ENCODE measurements at regions of chr16 and their contacts with region 1.

Region 1: GRCh38 chr16:12067714-12068401 is 91.3 kb downstream of the SNX29 start:
- DNase-seq: peak; percentile 84
- ATAC-seq: peak; percentile 91
- H3K4me3 ChIP-seq: no peak overlapping the region
- H3K4me3 Mint-ChIP-seq: no peak overlapping the region
- H3K27ac ChIP-seq: no peak overlapping the region
- H3K27ac Mint-ChIP-seq: peak overlapping the region; percentile 61
- H3K4me1 ChIP-seq: peaks cover 0 to 4% of the 10 kb centered on the region in 2 donors
- H3K4me1 Mint-ChIP-seq: peaks cover 21% of the 10 kb centered on the region
- H3K27me3 ChIP-seq: no peaks in the 10 kb centered on the region
- H3K27me3 Mint-ChIP-seq: no peaks in the 10 kb centered on the region
- CTCF ChIP-seq: peak; percentile 94

Region 2: DNA sequence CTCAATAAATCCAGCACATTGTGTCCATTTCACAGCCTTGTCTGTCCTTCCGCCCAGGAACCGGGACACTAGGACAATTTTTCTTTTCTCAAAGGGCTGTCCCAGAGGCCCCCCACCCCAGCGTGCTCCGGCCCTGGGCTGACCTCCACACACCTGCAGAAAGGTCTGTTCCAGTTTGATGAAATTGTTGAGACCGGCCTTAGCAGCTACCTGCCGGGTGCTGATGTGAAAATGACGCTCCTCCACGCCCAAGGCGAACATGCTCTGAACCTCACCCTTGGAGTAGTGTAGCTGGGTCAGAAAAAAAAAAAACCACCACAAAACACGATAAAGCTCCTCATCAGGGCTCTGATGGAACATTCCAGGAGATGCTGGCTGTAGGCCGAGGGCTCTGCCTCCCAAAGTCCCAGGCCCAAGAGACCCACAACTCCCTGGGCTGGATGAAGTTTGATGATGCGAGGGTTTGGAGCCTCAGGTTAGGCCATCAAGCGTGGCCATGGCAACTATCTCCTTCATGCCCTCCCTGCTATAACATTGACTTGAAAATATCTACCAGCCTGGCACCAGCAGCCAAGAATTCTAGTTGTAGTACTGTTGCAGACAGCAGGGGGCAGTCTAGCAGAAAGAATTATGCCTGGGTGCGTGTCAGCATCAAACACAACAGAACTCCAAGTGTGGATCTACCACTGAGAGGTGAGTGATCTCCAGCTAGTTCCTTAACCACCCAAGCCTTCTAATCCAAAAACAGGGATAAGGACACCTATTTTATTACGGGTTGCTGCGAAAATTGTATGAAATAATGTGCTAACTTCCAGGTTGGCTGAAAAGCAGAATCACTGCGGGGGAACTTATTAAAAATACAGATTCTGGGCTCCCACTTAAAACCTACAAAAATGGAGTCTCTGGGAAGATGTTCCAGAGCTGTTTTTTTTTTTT is 660.5 kb before region 1 on chr16:
- CTCF ChIA-PET with region 1: no interaction called
- POLR2A ChIA-PET with region 1: no interaction called
- intact Hi-C with region 1: loop called (anchors 5 kb)
- DNase-seq: peak; percentile 78
- ATAC-seq: peak; percentile 71
- H3K4me3 ChIP-seq: no peak overlapping the region
- H3K4me3 Mint-ChIP-seq: no peak overlapping the region
- H3K27ac ChIP-seq: no peak overlapping the region
- H3K27ac Mint-ChIP-seq: no peak overlapping the region
- H3K4me1 ChIP-seq: no peaks in the 10 kb centered on the region
- H3K4me1 Mint-ChIP-seq: peaks cover 2% of the 10 kb centered on the region
- H3K27me3 ChIP-seq: no peaks in the 10 kb centered on the region
- H3K27me3 Mint-ChIP-seq: no peaks in the 10 kb centered on the region
- CTCF ChIP-seq: peak; percentile 83

Region 3: DNA sequence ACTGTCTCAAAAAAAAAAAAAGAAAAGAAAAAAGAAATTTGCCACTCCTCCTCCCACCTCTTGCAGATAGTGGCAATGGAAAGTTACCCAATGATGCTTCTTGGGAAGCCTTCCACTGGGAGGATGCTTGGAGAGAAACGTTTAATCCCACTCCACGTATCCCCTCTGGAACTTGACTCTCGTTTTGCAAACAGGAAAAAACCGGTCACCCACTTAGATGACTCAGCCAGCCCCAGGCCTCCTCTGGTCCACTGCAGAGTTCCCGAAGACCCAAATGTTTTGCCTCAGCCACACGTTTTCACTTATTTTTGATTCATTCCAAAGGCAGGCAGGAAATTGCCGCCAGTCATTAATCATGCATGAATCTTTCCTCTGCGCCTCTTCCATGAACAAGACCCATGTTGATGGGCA is 112.1 kb before region 1 on chr16:
- CTCF ChIA-PET with region 1: interaction called, 37 read pairs
- POLR2A ChIA-PET with region 1: no interaction called
- intact Hi-C with region 1: no loop called
- DNase-seq: no peak
- ATAC-seq: no peak
- H3K4me3 ChIP-seq: no peak overlapping the region
- H3K4me3 Mint-ChIP-seq: no peak overlapping the region
- H3K27ac ChIP-seq: no peak overlapping the region
- H3K27ac Mint-ChIP-seq: peak overlapping the region; percentile 37
- H3K4me1 ChIP-seq: peaks cover 17 to 23% of the 10 kb centered on the region in 2 donors
- H3K4me1 Mint-ChIP-seq: peaks cover 19% of the 10 kb centered on the region
- H3K27me3 ChIP-seq: no peaks in the 10 kb centered on the region
- H3K27me3 Mint-ChIP-seq: no peaks in the 10 kb centered on the region
- CTCF ChIP-seq: no peak

Region 4: DNA sequence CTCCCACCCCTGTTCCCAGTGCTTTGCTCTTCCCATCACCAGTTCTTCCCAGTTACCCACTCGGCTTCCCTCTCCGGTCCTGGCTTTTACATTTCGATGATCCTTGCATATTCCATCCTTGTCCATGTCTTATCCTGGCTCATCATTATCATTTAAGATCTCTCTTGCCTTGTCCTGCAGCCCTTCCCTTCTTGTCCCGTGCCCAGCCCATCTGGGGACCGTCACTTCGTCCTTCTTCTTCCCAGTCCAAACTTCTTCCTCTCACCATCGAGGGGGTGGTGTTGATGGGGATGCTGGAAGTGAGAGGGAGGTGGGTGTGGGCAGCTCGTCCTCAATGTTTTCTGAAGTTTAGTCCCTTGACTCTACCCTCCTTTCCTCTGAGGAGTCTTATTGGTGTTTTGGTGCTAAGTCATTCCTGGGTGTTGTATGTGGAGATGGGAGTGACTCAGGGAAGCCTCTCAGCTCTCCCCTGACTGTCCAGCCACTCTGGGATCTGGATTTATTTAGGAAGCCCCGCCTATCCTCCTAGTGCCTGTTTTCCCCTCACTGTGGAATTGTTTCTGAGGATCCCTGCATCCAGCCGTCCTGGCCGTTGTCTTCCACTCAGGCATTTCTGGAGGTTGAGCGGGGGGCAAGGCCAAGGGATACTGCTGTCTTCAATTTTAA is 90.3 kb before region 1 on chr16:
- CTCF ChIA-PET with region 1: interaction called, 23 read pairs
- POLR2A ChIA-PET with region 1: no interaction called
- intact Hi-C with region 1: no loop called
- DNase-seq: no peak
- ATAC-seq: no peak
- H3K4me3 ChIP-seq: peak overlapping the region; percentile 75 to 100 (median 84)
- H3K4me3 Mint-ChIP-seq: peak overlapping the region; percentile 96
- H3K27ac ChIP-seq: peak overlapping the region; percentile 82 to 92
- H3K27ac Mint-ChIP-seq: peak overlapping the region; percentile 94
- H3K4me1 ChIP-seq: peaks cover 55 to 60% of the 10 kb centered on the region in 2 donors
- H3K4me1 Mint-ChIP-seq: peaks cover 60% of the 10 kb centered on the region
- H3K27me3 ChIP-seq: no peaks in the 10 kb centered on the region
- H3K27me3 Mint-ChIP-seq: no peaks in the 10 kb centered on the region
- CTCF ChIP-seq: no peak

Region 5: DNA sequence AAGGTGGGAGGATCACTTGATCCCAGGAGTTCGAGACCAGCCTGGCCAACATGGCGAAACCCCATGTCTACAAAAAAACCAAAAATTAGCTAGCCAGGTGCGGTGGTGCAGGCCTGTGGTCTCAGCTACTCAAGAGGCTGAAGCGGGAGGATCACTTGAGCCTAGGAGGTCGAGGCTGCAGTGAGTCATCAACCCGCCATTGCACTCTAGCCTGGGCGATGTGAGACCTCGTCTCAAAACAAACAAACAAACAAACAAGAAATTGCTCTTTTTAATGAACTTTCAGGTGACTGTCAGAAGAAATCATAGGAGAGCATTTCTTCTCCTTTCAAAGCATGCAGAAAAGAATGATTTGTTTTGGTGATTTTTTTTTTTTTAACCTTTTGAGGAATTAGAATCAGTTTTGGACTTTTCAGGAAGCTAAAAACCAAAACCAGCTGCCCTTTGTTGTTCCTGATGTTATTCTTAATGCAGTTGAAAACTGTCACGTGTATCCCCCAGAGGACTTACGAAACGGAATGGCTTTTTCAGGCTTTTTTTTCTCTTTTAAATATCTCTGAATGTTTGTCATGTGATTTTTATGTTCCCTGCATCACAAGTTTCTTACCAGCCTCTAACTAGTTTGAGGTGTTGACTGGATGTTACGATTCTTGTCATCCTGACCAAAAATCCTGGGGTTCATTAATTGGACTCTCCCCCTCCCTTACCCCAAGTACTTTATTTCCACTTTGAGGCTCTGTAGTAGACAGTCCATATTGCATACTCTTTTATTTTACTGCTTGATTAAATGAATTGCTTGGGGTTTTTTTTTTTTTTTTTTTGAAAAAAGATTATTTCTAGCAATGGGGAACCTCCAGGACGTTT is 57.2 kb before region 1 on chr16:
- CTCF ChIA-PET with region 1: interaction called, 13 read pairs
- POLR2A ChIA-PET with region 1: no interaction called
- intact Hi-C with region 1: no loop called
- DNase-seq: peak; percentile 75
- ATAC-seq: peak; percentile 60
- H3K4me3 ChIP-seq: peak overlapping the region in 1 of 5 experiments; percentile 44
- H3K4me3 Mint-ChIP-seq: peak overlapping the region; percentile 77
- H3K27ac ChIP-seq: peak overlapping the region; percentile 78 to 81
- H3K27ac Mint-ChIP-seq: peak overlapping the region; percentile 96
- H3K4me1 ChIP-seq: peaks cover 38 to 43% of the 10 kb centered on the region in 2 donors
- H3K4me1 Mint-ChIP-seq: peaks cover 50% of the 10 kb centered on the region
- H3K27me3 ChIP-seq: no peaks in the 10 kb centered on the region
- H3K27me3 Mint-ChIP-seq: no peaks in the 10 kb centered on the region
- CTCF ChIP-seq: no peak

Region 6: GRCh38 chr16:12079412-12079965 is 11.6 kb after region 1 on chr16:
- CTCF ChIA-PET with region 1: interaction called, 29 read pairs
- POLR2A ChIA-PET with region 1: interaction called, 4 read pairs
- intact Hi-C with region 1: no loop called
- DNase-seq: no peak
- ATAC-seq: no peak
- H3K4me3 ChIP-seq: no peak overlapping the region
- H3K4me3 Mint-ChIP-seq: no peak overlapping the region
- H3K27ac ChIP-seq: peak overlapping the region; percentile 71 to 79
- H3K27ac Mint-ChIP-seq: peak overlapping the region; percentile 82
- H3K4me1 ChIP-seq: peaks cover 31 to 57% of the 10 kb centered on the region in 2 donors
- H3K4me1 Mint-ChIP-seq: peaks cover 45% of the 10 kb centered on the region
- H3K27me3 ChIP-seq: no peaks in the 10 kb centered on the region
- H3K27me3 Mint-ChIP-seq: no peaks in the 10 kb centered on the region
- CTCF ChIP-seq: no peak

Measured in B cell (primary cell).